GM12878 (cell line): ENCODE measurements at regions of chr15 and their contacts with region 1.

Region 1: GRCh38 chr15:100918034-100918689 is 995 bp upstream of the LRRK1 start:
- DNase-seq: no peak
- ATAC-seq: peak; percentile 83
- H3K4me3 ChIP-seq: peak overlapping the region; percentile 89
- H3K27ac ChIP-seq: peak overlapping the region; percentile 83
- H3K4me1 ChIP-seq: peaks cover 21% of the 10 kb centered on the region
- H3K27me3 ChIP-seq: no peaks in the 10 kb centered on the region
- CTCF ChIP-seq: peak; percentile 93 to 98 (median 96)
- EP300 ChIP-seq: no peak
- POLR2A ChIP-seq: peak; percentile 46; the same call in 1 of the 2 replicates
- RAD21 ChIP-seq: peak; percentile 87

Region 2: DNA sequence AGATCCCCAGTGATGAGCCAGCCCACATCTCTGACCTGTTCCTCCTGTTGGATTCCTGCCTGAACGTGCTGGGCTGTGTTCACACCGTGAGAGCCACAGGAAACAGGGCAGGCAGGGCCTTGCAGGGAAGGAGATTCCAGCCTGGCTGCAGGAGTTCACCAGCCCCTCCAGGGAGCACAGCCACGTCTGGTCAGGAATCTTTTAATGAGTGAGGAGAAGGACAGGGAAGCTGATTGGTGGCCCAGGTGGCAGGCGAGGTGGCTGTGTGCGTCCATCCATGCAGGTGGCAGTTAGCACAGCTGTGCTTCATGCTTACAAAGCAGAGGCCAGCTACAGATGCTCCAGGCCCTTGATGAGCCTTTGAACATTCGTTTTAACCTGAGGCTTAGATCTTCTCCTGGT is 11.5 kb after region 1 on chr15:
- CTCF ChIA-PET with region 1: interaction called, 59 read pairs
- POLR2A ChIA-PET with region 1: interaction called, 17 read pairs
- RAD21 ChIA-PET with region 1: interaction called, 48 read pairs
- SMC1A ChIA-PET with region 1: interaction called, 45 read pairs
- in situ Hi-C with region 1: no loop called
- intact Hi-C with region 1: no loop called
- DNase-seq: no peak
- ATAC-seq: peak; percentile 39
- H3K4me3 ChIP-seq: no peak overlapping the region
- H3K27ac ChIP-seq: peak overlapping the region; percentile 81
- H3K4me1 ChIP-seq: peaks cover 74% of the 10 kb centered on the region
- H3K27me3 ChIP-seq: no peaks in the 10 kb centered on the region
- CTCF ChIP-seq: no peak
- EP300 ChIP-seq: no peak
- POLR2A ChIP-seq: 0 out of 2 replicates have a peak, but pooled peaks have one; percentile 34
- RAD21 ChIP-seq: no peak

Region 3: DNA sequence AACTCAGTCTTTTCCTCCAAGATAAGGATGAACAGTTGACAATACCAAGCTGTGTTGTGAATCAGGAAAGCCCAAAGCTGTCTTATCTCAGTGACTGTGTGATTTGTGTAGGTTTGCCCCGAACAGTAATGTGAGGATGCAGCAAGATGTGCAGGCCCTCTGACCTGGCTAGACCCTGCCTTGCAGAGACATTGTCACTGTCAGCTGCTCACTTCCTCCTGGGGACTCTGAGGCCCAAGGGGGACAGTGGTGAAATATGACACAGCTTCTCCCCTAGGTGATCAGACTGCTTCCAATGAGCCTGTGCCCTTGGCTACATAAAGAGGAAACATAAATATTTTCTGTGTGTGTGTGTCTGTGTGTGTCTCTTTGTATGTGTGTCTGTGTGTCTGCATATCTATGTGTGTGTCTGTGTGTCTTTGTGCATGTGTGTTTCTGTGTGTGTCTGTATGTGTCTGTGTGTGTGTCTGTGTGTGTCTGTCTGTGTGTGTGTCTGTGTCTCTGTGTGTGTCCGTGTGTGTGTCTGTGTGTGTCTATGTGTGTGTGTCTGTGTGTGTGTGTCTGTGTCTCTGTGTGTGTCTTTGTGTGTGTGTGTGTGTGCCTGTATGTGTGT is 22.7 kb after region 1 on chr15:
- CTCF ChIA-PET with region 1: interaction called, 129 read pairs
- POLR2A ChIA-PET with region 1: interaction called, 97 read pairs
- RAD21 ChIA-PET with region 1: interaction called, 152 read pairs
- SMC1A ChIA-PET with region 1: interaction called, 122 read pairs
- in situ Hi-C with region 1: no loop called
- intact Hi-C with region 1: no loop called
- DNase-seq: no peak
- ATAC-seq: peak; percentile 87
- H3K4me3 ChIP-seq: peak overlapping the region; percentile 31; the same call in 1 of the 2 replicates
- H3K27ac ChIP-seq: peak overlapping the region; percentile 85
- H3K4me1 ChIP-seq: peaks cover 38% of the 10 kb centered on the region
- H3K27me3 ChIP-seq: no peaks in the 10 kb centered on the region
- CTCF ChIP-seq: no peak
- EP300 ChIP-seq: peak; percentile 13 to 32; a peak in 1 of 4 replicates
- POLR2A ChIP-seq: peak; percentile 47
- RAD21 ChIP-seq: no peak

Region 4: DNA sequence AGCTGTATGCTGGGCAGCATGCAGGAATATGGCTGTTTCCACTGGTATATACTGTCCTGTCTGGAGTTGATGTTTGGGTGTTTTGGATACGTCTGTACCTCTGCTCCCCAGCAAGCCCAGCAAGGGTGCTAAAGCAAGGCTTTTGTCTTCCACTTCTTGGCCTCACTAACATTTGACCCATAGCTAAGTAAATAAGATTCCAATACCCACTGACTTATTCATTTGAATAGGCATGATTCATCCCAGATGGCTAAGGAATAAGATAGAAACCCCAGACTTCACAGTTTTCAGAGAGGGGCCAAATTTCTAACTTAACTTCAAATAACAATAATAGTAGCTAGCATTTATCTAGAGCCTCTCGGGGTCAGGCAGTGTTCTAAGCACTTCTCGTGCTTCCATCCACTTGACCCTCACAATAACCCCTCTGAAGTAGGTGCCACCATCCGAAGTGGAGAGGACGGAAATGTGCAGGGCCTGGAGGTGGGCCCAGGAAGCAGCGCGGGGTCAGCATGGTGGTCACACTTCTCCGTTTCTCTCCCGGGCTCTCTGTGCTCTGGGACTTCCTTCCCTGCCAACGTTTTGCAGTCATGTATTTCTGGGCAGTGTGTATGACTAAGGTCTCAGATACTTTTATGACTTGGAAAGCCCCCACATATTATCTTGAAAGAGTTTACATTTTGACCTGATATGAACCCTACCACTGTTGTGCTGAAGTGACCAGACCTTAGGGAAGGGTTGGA is 40.3 kb after region 1 on chr15:
- CTCF ChIA-PET with region 1: interaction called, 11 read pairs
- POLR2A ChIA-PET with region 1: interaction called, 6 read pairs
- RAD21 ChIA-PET with region 1: interaction called, 6 read pairs
- SMC1A ChIA-PET with region 1: interaction called, 4 read pairs
- in situ Hi-C with region 1: no loop called
- intact Hi-C with region 1: no loop called
- DNase-seq: no peak
- ATAC-seq: peak; percentile 87
- H3K4me3 ChIP-seq: no peak overlapping the region
- H3K27ac ChIP-seq: peak overlapping the region; percentile 17
- H3K4me1 ChIP-seq: peaks cover 10% of the 10 kb centered on the region
- H3K27me3 ChIP-seq: no peaks in the 10 kb centered on the region
- CTCF ChIP-seq: no peak
- EP300 ChIP-seq: no peak
- POLR2A ChIP-seq: no peak
- RAD21 ChIP-seq: no peak

Region 5: DNA sequence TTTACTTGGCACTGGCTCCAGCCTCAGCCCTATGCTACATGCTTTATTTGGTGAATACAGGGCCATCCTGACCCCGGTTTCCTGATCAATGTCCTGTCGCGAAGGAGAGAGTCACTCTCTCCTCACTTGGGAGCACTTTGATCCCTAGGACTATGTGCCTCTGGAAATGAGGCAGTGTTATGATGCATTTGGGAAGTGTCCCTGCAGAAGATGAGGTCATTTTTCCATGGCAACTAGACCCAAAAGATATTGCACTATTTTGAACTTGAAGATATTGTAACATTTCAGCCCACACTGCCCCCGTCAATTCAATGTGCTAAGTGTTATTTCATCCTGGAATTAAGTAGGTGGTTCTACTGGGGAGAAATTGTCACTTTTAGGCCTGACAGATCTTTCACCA is 69.0 kb after region 1 on chr15:
- CTCF ChIA-PET with region 1: interaction called, 21 read pairs
- POLR2A ChIA-PET with region 1: interaction called, 3 read pairs
- RAD21 ChIA-PET with region 1: interaction called, 3 read pairs
- SMC1A ChIA-PET with region 1: interaction called, 23 read pairs
- in situ Hi-C with region 1: no loop called
- intact Hi-C with region 1: no loop called
- DNase-seq: no peak
- ATAC-seq: no peak
- H3K4me3 ChIP-seq: no peak overlapping the region
- H3K27ac ChIP-seq: no peak overlapping the region
- H3K4me1 ChIP-seq: peaks cover 4% of the 10 kb centered on the region; the same call in 1 of the 2 replicates
- H3K27me3 ChIP-seq: no peaks in the 10 kb centered on the region
- CTCF ChIP-seq: no peak
- EP300 ChIP-seq: no peak
- POLR2A ChIP-seq: no peak
- RAD21 ChIP-seq: no peak

Region 6: DNA sequence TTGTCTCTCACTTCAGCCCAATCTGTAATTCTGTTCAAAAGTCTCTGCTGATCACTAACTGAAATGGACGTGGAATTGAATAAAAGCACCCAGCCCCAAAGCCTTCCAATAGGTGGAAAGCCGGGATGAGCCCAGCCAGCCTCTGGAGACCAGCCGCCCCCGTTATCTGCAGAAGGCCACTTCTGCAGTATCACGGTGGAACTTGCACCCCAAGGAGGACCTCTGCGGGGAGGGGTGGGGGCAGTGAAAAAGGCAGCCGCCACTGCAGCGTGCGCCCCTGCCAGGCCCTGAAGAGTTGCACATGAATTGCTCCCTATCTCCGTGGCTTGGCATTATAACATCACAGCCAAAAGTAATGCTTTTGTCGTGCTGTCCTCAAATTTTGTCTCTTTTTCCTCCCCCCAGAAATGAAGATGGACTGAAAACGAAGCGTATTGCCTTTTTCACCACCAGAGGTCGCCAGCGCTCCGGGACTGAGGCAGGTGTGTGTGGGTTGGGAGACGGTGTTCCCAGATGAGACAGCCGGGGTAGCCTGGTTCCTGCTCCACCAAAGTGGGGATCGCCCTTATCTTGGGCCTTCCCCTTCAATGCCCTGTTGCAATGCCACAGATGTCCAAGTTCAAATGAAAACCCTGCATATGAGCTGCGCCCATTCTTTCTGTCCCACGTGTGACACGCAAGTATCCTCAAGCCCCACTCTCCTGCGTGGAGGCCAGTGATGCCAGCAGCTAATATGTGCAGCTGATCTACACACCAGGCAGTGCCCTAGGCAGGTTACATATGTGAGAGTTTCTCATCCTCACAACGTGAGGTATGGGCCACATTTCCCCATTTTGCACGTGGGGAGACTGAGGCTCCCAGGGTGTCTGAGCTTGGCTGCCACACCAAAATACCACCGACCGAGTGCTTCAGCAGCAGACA is 97.0 kb after region 1 on chr15:
- CTCF ChIA-PET with region 1: interaction called, 567 read pairs
- POLR2A ChIA-PET with region 1: no interaction called
- RAD21 ChIA-PET with region 1: interaction called, 287 read pairs
- SMC1A ChIA-PET with region 1: interaction called, 316 read pairs
- in situ Hi-C with region 1: no loop called
- intact Hi-C with region 1: no loop called
- DNase-seq: peak; percentile 5
- ATAC-seq: peak; percentile 89
- H3K4me3 ChIP-seq: no peak overlapping the region
- H3K27ac ChIP-seq: no peak overlapping the region
- H3K4me1 ChIP-seq: no peaks in the 10 kb centered on the region
- H3K27me3 ChIP-seq: no peaks in the 10 kb centered on the region
- CTCF ChIP-seq: peak; percentile 82 to 88 (median 87)
- EP300 ChIP-seq: no peak
- POLR2A ChIP-seq: no peak
- RAD21 ChIP-seq: peak; percentile 87